AG04449 (cell line): ENCODE measurements at regions of chr10 and their contacts with region 1.

Region 1: DNA sequence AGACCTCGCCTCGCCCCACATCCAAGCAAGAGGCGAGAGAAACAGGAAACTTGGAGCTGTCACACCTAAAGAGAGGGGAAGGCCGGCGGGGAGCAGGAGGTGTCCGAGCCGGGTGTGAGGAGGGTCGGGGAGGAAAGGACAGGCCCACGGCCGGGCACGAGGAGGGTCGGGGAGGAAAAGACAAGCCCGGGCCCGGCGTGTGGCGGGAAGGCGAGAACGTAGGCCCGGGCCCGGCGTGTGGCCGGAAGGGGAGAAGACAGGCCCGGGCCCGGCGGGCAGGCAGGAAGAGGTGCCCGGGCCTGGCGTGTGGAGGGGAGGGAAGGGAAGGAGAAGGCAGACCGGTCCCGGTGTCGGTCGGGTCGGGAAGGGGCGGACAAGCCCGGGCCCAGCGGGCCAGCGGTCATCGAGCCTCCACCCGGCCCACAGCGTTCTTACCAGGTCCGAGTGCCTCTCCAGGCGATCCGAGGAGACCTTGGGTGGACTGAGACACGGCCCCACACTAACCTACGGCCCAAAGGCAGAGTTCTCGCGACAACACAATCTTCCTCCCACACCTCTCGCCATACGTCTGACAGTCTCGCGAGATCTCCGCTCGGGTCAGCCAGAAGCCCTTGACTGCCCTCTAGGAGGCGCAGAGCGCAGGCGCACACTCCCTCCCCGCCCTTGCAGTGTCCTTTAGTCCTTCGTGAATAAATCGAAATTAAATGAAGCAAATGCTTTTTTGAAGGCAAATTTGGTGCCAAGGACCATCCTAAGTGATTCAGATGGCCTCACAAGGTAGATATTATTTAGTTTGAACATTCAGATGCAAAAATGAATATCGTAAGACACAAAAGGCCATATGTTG is at the start of gene NCOA4:
- DNase-seq: peak; percentile 86
- H3K4me3 ChIP-seq: peak within 1 kb of the TSS; percentile 94
- CTCF ChIP-seq: peak; percentile 84

Region 2: DNA sequence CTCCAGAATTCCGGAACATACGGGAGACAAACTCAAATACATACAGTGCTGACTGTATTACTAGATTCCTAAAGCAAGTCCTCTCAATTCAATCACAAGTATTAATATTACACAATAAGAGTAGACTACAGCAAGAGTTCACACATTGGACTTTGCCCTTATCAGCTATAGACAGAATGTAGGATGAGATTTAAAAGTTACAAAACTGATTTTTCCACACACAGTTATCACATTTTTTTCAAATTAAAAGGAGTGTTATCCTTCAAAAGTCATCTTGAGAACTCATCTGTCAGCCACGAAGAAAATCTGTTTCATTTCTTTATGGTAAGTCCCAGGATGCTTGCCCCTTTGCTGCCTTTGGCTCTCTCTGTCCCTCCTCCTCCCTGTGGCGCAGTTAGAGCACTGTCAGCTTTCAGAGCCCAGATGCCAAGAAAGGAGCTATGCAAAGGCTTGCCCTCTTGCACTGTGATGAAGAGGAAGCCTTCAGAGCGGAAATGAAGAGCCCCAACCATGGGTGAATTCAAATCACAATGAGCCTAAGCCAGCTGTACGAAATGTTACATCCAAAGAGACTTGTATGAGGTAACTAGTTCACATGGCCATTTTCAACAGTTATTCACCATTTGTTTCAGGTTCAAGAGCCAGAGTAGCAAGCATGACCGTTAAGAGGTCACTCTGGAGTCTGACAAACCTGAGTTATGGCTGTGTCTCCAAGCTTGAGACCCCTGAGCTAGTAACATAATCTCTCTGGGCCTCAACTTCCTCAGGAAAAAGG is 10.6 kb before region 1 on chr10:
- CTCF ChIA-PET with region 1: interaction called, 57 read pairs
- POLR2A ChIA-PET with region 1: interaction called, 4 read pairs
- DNase-seq: no peak
- H3K4me3 ChIP-seq: no peak overlapping the region
- CTCF ChIP-seq: no peak

Region 3: GRCh38 chr10:46048156-46048555 is 17.8 kb after region 1 on chr10:
- CTCF ChIA-PET with region 1: no interaction called
- POLR2A ChIA-PET with region 1: no interaction called
- DNase-seq: no peak
- H3K4me3 ChIP-seq: no peak overlapping the region
- CTCF ChIP-seq: no peak